Ascending aorta (tissue), 2 donors: ENCODE measurements at regions of chr1 and their contacts with region 1.

Region 1: DNA sequence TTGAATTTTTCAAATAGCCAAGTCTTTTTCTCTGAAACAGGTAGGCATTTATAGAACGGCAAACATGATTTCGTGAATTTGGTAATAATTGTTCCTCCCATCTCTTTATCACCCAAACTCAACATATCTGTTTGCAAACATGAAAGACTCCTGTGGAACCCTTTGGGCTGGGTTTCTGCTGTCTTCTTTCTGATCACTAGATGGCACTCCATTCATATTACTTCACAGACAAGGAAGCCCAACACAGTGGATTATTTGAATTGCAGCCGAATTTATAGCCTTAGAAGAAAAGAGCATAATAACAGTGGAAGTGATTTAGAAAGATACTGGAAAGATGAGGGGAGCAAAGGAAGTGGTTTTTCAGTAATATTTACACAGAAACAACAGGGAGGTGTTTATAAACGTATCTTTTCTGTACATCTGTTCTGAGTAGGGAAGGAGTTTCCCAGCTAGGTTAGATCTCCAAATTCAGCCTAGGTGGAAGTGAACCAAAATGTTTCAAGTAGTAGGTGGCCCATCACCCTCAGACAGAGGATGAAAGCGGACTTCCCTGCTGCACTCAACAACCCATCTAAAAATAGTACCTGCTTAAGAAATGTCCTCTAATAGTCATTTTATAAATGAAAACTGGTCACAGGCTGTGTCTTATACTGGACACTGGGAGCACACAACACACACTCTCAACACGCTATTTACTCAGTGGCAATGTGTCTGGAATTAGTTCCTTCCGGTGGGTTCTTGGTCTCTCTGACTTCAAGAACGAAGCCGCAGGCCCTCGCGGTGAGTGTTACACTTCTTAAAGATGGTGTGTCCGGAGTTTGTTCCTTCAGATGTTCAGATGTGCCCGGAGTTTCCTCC is 67.6 kb downstream of the MAP3K21 start:
- DNase-seq: no peak
- H3K4me3 ChIP-seq: no peak overlapping the region
- H3K27ac ChIP-seq: no peak overlapping the region
- H3K4me1 ChIP-seq: no peaks in the 10 kb centered on the region
- H3K27me3 ChIP-seq: no peaks in the 10 kb centered on the region
- CTCF ChIP-seq: peak in 2 of 3 experiments; percentile 38 to 61

Region 2: DNA sequence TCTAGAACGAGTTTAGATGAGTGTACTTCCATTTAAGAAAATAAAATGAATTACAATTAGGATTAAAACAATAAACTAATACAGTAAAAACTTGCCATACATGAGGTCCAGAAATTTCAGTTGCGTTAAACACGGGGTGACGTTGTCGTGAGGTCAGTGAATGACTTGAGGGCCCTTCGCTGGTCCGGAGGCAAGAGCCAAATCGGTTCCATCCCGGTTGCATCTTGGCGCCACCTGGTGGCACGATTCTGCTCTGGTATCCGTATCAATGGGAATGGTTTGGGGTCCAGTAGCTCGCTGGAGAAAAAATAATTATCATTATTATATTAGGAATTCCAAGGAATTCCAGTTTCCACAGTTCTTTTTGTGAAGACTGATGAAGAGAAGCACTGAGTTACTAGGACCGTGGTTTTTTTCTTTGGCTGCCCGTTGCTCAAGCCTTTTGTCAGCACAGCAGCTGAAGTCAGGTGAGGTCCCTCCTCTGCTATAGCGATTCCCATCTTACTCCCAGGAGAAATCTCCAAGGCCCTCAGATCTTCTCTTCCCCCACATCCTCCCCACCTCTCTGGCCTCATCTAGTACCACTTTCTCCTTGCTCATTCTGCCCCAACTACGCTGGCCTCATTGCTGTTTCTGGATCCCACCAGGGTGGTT is 670.8 kb after region 1 on chr1:
- intact Hi-C with region 1: loop called (anchors 5 kb)
- DNase-seq: no peak
- H3K4me3 ChIP-seq: no peak overlapping the region
- H3K27ac ChIP-seq: no peak overlapping the region
- H3K4me1 ChIP-seq: no peaks in the 10 kb centered on the region
- H3K27me3 ChIP-seq: no peaks in the 10 kb centered on the region
- CTCF ChIP-seq: peak; percentile 7 to 48 (median 35)